Heart right ventricle (tissue), 16 donors: ENCODE measurements at regions of chr1 and their contacts with region 1.

Region 1: GRCh38 chr1:153796791-153797659 is 21.8 kb downstream of the SLC27A3 start:
- DNase-seq: peak; percentile 53 to 84
- ATAC-seq: peak in 7 of 8 donors; percentile 51 to 76 (median 69)
- H3K4me3 ChIP-seq: no peak overlapping the region
- H3K27ac ChIP-seq: no peak overlapping the region
- H3K4me1 ChIP-seq: peaks cover 0 to 15% (median 0%) of the 10 kb centered on the region in 9 donors
- H3K27me3 ChIP-seq: no peaks in the 10 kb centered on the region
- CTCF ChIP-seq: peak; percentile 83 to 96 (median 92)

Region 2: DNA sequence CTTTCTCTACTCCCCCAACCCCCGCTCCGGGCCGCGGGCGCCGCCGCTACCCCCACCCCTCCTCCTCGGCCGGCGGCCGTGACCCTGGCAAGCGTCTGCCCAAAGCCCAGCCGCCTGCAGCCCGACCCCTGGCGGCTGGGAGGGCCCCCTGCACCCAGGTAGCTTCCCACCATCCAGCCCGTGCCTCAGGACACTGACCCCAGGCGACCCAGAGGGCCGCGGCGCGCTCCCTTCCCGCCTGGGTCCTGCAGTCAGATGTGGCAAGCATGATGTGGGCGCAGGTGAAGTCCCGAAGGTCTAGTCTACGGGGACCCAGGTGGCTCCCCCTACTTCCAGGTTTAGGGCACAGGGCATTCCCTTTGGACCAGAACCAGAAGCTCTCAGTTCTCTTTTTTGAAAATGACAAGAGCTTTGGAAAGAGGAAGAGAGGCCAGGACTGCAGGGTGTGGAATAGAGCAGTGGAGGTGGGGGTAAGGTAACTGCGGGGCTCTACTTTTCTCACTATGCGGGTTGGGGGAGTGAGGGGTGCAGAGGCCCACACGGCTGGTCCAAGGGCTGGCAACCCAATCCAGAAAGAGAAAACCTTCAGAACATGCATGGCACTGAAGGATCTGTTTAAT is 149.7 kb after region 1 on chr1 and contains the start of gene DENND4B:
- intact Hi-C with region 1: loop called in 4 of 10 experiments (anchors 5 to 10 kb)
- DNase-seq: peak; percentile 83 to 87
- ATAC-seq: peak; percentile 73 to 86 (median 78)
- H3K4me3 ChIP-seq: peak within 1 kb of the TSS; percentile 65 to 99 (median 91)
- H3K27ac ChIP-seq: peak within 1 kb of the TSS; percentile 97 to 100 (median 100)
- H3K4me1 ChIP-seq: peaks cover 5 to 44% (median 30%) of the 10 kb centered on the region in 9 donors
- H3K27me3 ChIP-seq: no peaks in the 10 kb centered on the region
- CTCF ChIP-seq: peak; percentile 89 to 98 (median 94)
- total RNA-seq, gene DENND4B: 29.4 to 60.4 (median 39.0) TPM

Region 3: GRCh38 chr1:153958111-153958960 is 161.3 kb after region 1 on chr1 and contains the start of gene CRTC2:
- intact Hi-C with region 1: loop called in 1 of 10 experiments (anchors 10 kb)
- DNase-seq: peak; percentile 97 to 99
- ATAC-seq: peak; percentile 88 to 95 (median 90)
- H3K4me3 ChIP-seq: peak within 1 kb of the TSS; percentile 71 to 99 (median 94)
- H3K27ac ChIP-seq: peak within 1 kb of the TSS; percentile 85 to 98 (median 94)
- H3K4me1 ChIP-seq: peaks cover 16 to 78% (median 58%) of the 10 kb centered on the region in 9 donors
- H3K27me3 ChIP-seq: no peaks in the 10 kb centered on the region
- CTCF ChIP-seq: peak in 1 of 9 donors; percentile 25
- total RNA-seq, gene CRTC2: 14.6 to 25.6 (median 18.0) TPM

Region 4: GRCh38 chr1:153967082-153968000 is 170.3 kb after region 1 on chr1 and contains the start of gene CREB3L4:
- intact Hi-C with region 1: loop called in 1 of 10 experiments (anchors 5 kb)
- DNase-seq: peak; percentile 89 to 94
- ATAC-seq: peak; percentile 85 to 92 (median 88)
- H3K4me3 ChIP-seq: peak within 1 kb of the TSS; percentile 24 to 91 (median 67)
- H3K27ac ChIP-seq: peak within 1 kb of the TSS; percentile 80 to 97 (median 94)
- H3K4me1 ChIP-seq: peaks cover 18 to 52% (median 37%) of the 10 kb centered on the region in 9 donors
- H3K27me3 ChIP-seq: no peaks in the 10 kb centered on the region
- CTCF ChIP-seq: peak in 8 of 9 donors; percentile 27 to 64 (median 42)
- total RNA-seq, gene CREB3L4: 2.9 to 8.5 (median 4.1) TPM

Region 5: GRCh38 chr1:153984123-153984894 is 187.3 kb after region 1 on chr1:
- intact Hi-C with region 1: loop called (anchors 1 to 5 kb)
- DNase-seq: no peak
- ATAC-seq: no peak
- H3K4me3 ChIP-seq: peak overlapping the region in 5 of 10 donors; percentile 53 to 71 (median 64)
- H3K27ac ChIP-seq: peak overlapping the region in 7 of 10 donors; percentile 74 to 91 (median 89)
- H3K4me1 ChIP-seq: peaks cover 8 to 43% (median 19%) of the 10 kb centered on the region in 9 donors
- H3K27me3 ChIP-seq: no peaks in the 10 kb centered on the region
- CTCF ChIP-seq: no peak